Activated T-helper 1 cell treated with anti-CD3 and anti-CD28 coated beads, Interleukin-12 subunit alpha, Interleukin-12 subunit beta, Interleukin-2, Interleukin-4 antibody, amounts not matched to agents 30 ng/mL and 10 ng/mL and 1 ng/mL, durations not matched to agents 14 hours and 24 hours and 36 hours (primary cell): ENCODE measurements at regions of chr2 and their contacts with region 1.

Region 1: DNA sequence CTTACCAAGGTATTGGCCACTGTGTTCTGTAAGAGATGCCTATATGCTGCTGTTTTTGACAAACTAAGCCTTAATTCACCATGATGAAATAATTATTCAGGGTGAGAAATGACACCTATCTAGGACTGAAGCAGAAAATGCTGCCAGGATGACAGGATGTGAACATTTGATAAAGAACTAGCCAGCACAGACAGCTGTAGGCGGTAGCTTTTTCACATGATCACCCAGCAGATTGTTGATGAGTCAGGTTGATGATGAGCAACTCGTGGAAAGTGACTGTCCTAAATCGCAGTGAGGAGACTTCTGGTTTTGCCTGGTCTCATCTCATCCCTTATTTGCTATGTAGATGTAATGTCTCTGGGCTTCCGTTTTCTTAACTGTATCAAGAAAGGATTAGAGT is 144.1 kb downstream of the PRPF40A start:
- DNase-seq: peak; percentile 7
- H3K4me3 Mint-ChIP-seq: no peak overlapping the region
- H3K27ac Mint-ChIP-seq: no peak overlapping the region
- H3K4me1 Mint-ChIP-seq: peaks cover 9% of the 10 kb centered on the region
- H3K27me3 Mint-ChIP-seq: peaks cover 6% of the 10 kb centered on the region

Region 2: GRCh38 chr2:151819920-151820319 is 753.2 kb before region 1 on chr2:
- intact Hi-C with region 1: loop called (anchors 2 kb)
- DNase-seq: no peak
- H3K4me3 Mint-ChIP-seq: no peak overlapping the region
- H3K27ac Mint-ChIP-seq: peak overlapping the region; percentile 68
- H3K4me1 Mint-ChIP-seq: peaks cover 51% of the 10 kb centered on the region
- H3K27me3 Mint-ChIP-seq: no peaks in the 10 kb centered on the region

Region 3: DNA sequence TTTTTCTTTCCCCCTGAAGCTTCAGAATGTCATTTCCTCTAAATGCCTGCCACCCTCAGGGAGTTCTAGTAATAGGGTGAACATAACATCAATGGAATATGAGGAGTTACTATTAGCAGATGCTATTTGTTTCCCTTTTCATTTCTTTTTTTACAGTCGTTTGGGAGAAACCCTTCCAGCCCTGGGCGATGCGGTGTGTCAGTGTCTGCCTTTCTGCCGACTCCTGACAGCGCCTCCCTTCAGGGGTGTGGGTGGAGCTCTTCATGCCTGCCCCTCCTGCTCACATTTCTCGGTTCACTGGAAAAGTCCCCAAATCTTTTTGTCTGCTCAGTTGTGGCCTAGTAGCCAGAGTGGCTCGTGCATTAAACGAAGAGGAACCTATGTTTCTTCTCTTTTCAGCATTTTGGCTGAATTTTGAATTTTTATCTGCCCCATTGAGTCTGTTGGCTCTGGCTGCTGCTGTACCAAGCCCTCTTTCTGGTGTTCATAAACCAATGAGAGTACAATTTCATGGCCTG is 165.9 kb before region 1 on chr2:
- intact Hi-C with region 1: loop called (anchors 1 kb)
- DNase-seq: peak; percentile 27
- H3K4me3 Mint-ChIP-seq: peak overlapping the region; percentile 73
- H3K27ac Mint-ChIP-seq: peak overlapping the region; percentile 67
- H3K4me1 Mint-ChIP-seq: peaks cover 57% of the 10 kb centered on the region
- H3K27me3 Mint-ChIP-seq: no peaks in the 10 kb centered on the region

Region 4: GRCh38 chr2:152415231-152415642 is 157.9 kb before region 1 on chr2:
- intact Hi-C with region 1: loop called (anchors 1 kb)
- DNase-seq: no peak
- H3K4me3 Mint-ChIP-seq: peak overlapping the region; percentile 16
- H3K27ac Mint-ChIP-seq: peak overlapping the region; percentile 77
- H3K4me1 Mint-ChIP-seq: peaks cover 41% of the 10 kb centered on the region
- H3K27me3 Mint-ChIP-seq: no peaks in the 10 kb centered on the region

Region 5: GRCh38 chr2:152506843-152507242 is 66.3 kb before region 1 on chr2:
- intact Hi-C with region 1: loop called (anchors 1 kb)
- DNase-seq: peak; percentile 6
- H3K4me3 Mint-ChIP-seq: no peak overlapping the region
- H3K27ac Mint-ChIP-seq: peak overlapping the region; percentile 63
- H3K4me1 Mint-ChIP-seq: peaks cover 20% of the 10 kb centered on the region
- H3K27me3 Mint-ChIP-seq: no peaks in the 10 kb centered on the region

Region 6: GRCh38 chr2:152611458-152612231 is 38.5 kb after region 1 on chr2:
- intact Hi-C with region 1: loop called (anchors 5 kb)
- DNase-seq: no peak
- H3K4me3 Mint-ChIP-seq: peak overlapping the region; percentile 6
- H3K27ac Mint-ChIP-seq: peak overlapping the region; percentile 18
- H3K4me1 Mint-ChIP-seq: peaks cover 33% of the 10 kb centered on the region
- H3K27me3 Mint-ChIP-seq: peaks cover 3% of the 10 kb centered on the region

Region 7: DNA sequence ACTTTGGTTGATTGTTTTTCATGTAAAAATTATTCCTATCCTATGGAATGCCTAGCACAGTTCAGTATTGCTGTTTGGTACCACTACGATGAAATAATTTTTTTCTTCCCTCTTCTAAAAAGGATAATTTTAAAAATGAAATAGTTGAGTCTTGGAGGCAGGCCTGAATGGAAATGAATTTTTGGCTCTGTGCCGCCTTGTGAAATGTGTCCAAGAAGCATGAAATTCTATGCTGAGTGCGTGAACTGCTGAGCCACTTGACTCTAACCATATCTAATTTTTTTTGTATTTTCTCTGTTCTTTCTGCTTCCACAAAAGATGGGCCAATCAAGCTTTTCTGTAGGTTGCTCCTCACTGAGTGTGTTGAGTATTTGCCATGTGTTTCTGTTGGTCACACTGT is 49.1 kb after region 1 on chr2:
- intact Hi-C with region 1: no loop called
- DNase-seq: no peak
- H3K4me3 Mint-ChIP-seq: no peak overlapping the region
- H3K27ac Mint-ChIP-seq: no peak overlapping the region
- H3K4me1 Mint-ChIP-seq: no peaks in the 10 kb centered on the region
- H3K27me3 Mint-ChIP-seq: peaks cover 4% of the 10 kb centered on the region